Panc1 (cell line): ENCODE measurements at regions of chr4 and their contacts with region 1.

Region 1: DNA sequence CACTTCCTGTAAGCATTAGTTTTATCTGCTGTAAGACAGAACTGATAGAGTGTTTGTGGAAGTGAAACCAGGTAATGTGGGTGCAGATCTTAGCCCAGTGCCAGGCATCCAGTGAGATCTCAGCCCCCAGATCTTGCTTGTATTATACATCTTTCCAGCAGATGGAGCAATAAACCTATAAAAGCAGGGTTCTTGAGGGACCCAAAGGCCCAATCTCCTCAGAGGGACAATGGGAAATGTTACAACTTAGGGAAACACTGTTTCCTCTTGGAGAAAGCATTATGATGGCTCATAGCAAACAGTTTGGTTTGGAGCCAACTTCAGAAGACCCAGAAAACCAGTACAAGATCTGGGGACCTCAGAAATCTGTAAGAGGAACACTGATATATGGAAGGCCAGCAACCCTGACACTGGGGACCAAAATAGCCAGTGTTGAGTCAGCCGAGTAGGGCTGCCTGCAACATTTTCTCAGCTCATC is 206.3 kb downstream of the SLC7A11 start:
- DNase-seq: no peak
- ATAC-seq: peak; percentile 85
- H3K4me3 ChIP-seq: no peak overlapping the region
- H3K27ac ChIP-seq: no peak overlapping the region
- H3K4me1 ChIP-seq: no peaks in the 10 kb centered on the region
- H3K27me3 ChIP-seq: no peaks in the 10 kb centered on the region
- CTCF ChIP-seq: peak; percentile 60

Region 2: GRCh38 chr4:137819964-137820383 is 215.8 kb before region 1 on chr4:
- CTCF ChIA-PET with region 1: no interaction called
- POLR2A ChIA-PET with region 1: no interaction called
- in situ Hi-C with region 1: no loop called
- intact Hi-C with region 1: loop called (anchors 10 kb)
- DNase-seq: peak; percentile 12
- ATAC-seq: peak; percentile 86
- H3K4me3 ChIP-seq: no peak overlapping the region
- H3K27ac ChIP-seq: no peak overlapping the region
- H3K4me1 ChIP-seq: no peaks in the 10 kb centered on the region
- H3K27me3 ChIP-seq: no peaks in the 10 kb centered on the region
- CTCF ChIP-seq: peak; percentile 61

Region 3: DNA sequence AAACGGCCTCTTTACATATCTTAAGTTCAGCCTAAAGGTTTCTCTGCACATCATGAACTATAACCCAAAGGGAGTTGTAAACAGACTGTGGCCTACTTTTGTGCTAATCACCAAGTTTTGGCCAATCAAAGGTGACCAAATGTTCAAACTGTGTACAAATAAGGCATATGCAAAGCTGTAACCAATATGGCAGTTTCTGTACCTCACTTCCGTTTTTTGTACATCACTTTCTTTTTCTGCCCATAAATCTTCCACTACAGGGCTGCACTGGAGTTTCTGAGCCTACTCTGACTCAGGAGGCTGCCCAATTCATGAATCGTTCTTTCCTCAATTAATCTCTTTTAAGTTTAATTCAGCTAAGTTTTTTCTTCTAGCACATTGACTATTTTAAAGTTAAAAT is 112.3 kb before region 1 on chr4:
- CTCF ChIA-PET with region 1: no interaction called
- POLR2A ChIA-PET with region 1: no interaction called
- in situ Hi-C with region 1: no loop called
- intact Hi-C with region 1: no loop called
- DNase-seq: no peak
- ATAC-seq: no peak
- H3K4me3 ChIP-seq: no peak overlapping the region
- H3K27ac ChIP-seq: no peak overlapping the region
- H3K4me1 ChIP-seq: no peaks in the 10 kb centered on the region
- H3K27me3 ChIP-seq: no peaks in the 10 kb centered on the region
- CTCF ChIP-seq: no peak

Region 4: DNA sequence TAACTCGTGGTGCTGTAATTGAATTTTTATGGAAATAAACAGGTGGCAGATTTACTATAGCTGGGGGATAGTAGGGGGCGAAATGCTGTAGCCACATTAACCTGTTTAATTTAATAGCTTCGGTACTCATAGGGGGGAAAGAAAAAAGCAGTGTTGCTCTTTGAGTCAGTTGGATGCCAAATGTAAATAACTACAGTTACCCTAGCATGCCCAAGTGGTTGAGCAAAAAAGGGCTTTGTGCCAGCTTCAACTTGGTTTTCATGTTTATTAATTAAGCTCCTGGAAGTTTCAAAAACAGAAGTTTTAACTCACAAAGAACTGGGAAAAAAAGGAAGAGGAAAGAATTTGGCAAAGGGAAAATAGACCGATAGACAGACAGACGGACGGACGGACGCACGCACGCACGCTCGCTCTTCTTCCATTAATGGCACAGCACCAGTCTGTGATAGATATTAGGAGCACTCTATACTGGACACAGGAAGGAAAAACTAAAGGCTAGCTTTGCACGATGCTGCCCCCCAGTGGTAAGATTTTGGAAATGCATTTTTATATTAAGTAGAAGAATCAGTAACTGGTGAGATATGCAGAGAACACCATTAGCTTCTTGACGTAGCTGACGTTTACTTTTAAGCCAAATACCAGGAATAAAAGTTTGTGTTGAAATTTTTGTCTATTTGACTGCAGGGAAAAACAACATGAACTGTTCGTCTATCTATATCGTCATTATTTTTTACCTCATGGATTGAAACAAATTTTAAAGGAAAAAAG is 54.5 kb after region 1 on chr4:
- CTCF ChIA-PET with region 1: interaction called, 3 read pairs
- POLR2A ChIA-PET with region 1: no interaction called
- in situ Hi-C with region 1: no loop called
- intact Hi-C with region 1: loop called (anchors 5 kb)
- DNase-seq: peak; percentile 54
- ATAC-seq: peak; percentile 80
- H3K4me3 ChIP-seq: peak overlapping the region in 1 of 2 experiments; percentile 3; a peak in 1 of 4 replicates
- H3K27ac ChIP-seq: no peak overlapping the region
- H3K4me1 ChIP-seq: no peaks in the 10 kb centered on the region
- H3K27me3 ChIP-seq: no peaks in the 10 kb centered on the region
- CTCF ChIP-seq: peak; percentile 77

Region 5: DNA sequence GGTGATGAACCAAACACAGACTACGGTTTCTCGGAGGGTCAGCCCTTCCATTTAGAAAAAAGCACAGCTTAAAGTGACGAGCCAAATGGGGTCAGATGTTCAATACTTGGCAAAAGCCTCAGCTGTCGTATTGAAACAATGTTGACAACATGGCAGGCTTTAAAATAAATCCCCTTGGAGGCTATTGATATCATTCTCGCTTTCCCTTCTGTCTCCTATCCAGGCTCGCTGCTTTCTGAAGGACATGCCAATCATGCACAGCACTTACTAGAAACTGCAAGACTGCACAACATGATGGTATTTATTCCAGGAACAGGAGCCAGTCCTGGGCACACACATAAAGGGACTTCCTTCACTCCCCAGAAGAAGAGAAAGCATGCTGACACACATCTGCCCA is 68.5 kb after region 1 on chr4:
- CTCF ChIA-PET with region 1: no interaction called
- POLR2A ChIA-PET with region 1: no interaction called
- in situ Hi-C with region 1: no loop called
- intact Hi-C with region 1: no loop called
- DNase-seq: no peak
- ATAC-seq: no peak
- H3K4me3 ChIP-seq: no peak overlapping the region
- H3K27ac ChIP-seq: no peak overlapping the region
- H3K4me1 ChIP-seq: no peaks in the 10 kb centered on the region
- H3K27me3 ChIP-seq: no peaks in the 10 kb centered on the region
- CTCF ChIP-seq: no peak

Region 6: DNA sequence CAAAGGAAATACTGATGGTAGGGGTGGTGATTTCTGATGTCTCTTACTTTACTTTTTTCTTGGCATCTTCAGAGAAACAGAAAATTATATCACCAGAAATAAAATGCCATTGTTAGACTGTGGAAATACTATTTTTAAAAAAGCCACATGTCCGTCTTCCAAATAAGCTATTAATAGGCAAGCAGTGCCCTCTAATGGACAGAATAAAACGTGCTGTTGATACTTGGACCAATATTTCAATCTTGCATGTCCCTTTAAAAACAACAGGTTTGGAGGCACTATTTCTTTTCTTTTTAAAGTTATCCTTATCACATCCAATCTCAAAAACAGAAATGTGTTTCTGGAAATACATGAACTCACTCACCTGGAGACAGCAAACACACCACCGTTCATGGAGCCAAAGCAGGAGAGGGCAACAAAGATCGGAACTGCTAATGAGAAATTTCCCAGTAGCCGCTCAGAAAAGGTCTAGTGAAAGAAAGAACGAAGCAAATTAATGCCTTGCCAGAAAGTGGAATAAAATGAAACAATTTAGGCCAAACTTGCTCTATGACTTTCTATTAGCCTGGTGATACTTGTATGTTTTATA is 147.1 kb after region 1 on chr4:
- CTCF ChIA-PET with region 1: no interaction called
- POLR2A ChIA-PET with region 1: no interaction called
- in situ Hi-C with region 1: no loop called
- intact Hi-C with region 1: loop called (anchors 5 kb)
- DNase-seq: no peak
- ATAC-seq: no peak
- H3K4me3 ChIP-seq: no peak overlapping the region
- H3K27ac ChIP-seq: no peak overlapping the region
- H3K4me1 ChIP-seq: no peaks in the 10 kb centered on the region
- H3K27me3 ChIP-seq: no peaks in the 10 kb centered on the region
- CTCF ChIP-seq: peak; percentile 54

Region 7: DNA sequence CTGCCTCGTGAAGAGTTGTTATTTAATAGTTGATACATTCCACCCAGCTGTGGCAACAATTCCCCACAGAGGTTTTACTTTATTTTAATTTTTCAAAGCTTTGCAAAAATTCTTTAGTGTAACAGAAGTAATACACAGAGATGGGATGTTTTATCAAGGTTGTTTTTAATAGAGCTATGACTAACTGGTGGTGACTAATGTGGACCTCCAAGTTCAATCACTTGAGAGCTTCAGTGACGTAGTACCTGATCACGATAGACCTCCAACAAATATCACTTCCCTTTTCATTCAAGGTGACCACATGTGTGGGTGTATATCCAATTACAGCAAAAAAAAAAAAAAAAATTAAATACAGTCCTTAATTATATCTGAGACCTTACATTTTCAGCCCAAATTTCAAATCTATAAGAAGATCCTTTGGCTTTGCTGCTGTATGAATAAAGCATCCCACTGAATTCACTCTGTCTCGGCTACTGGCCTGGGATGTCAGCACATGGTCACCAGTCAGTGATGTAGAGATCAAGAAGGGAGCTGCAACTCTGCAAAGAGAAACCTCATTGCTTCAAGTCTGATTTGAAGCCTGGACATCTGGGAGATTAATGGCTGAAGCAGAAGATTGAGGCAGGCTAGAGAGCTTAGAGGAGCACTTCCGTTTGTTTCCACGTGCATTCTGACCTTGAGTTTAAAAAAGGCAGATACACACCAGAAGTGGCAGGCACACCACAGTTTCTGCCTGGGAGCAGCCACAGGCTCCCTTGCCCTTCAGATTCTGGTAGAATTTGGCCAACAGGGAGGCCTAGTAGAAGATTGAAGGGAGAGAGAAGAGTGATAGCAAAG is 633.9 kb after region 1 on chr4:
- CTCF ChIA-PET with region 1: no interaction called
- POLR2A ChIA-PET with region 1: no interaction called
- in situ Hi-C with region 1: no loop called
- intact Hi-C with region 1: no loop called
- DNase-seq: no peak
- ATAC-seq: no peak
- H3K4me3 ChIP-seq: no peak overlapping the region
- H3K27ac ChIP-seq: no peak overlapping the region
- H3K4me1 ChIP-seq: no peaks in the 10 kb centered on the region
- H3K27me3 ChIP-seq: no peaks in the 10 kb centered on the region
- CTCF ChIP-seq: no peak

Region 8: GRCh38 chr4:138680989-138681604 is 645.3 kb after region 1 on chr4:
- CTCF ChIA-PET with region 1: no interaction called
- POLR2A ChIA-PET with region 1: no interaction called
- in situ Hi-C with region 1: no loop called
- intact Hi-C with region 1: loop called (anchors 5 kb)
- DNase-seq: peak; percentile 42
- ATAC-seq: peak; percentile 86
- H3K4me3 ChIP-seq: no peak overlapping the region
- H3K27ac ChIP-seq: no peak overlapping the region
- H3K4me1 ChIP-seq: no peaks in the 10 kb centered on the region
- H3K27me3 ChIP-seq: no peaks in the 10 kb centered on the region; the same call in 1 of the 2 replicates
- CTCF ChIP-seq: peak; percentile 77